Activated naive CD4-positive, alpha-beta T cell treated with anti-CD3 and anti-CD28 coated beads for 36 hours (primary cell): ENCODE measurements at regions of chr6 and their contacts with region 1.

Region 1: DNA sequence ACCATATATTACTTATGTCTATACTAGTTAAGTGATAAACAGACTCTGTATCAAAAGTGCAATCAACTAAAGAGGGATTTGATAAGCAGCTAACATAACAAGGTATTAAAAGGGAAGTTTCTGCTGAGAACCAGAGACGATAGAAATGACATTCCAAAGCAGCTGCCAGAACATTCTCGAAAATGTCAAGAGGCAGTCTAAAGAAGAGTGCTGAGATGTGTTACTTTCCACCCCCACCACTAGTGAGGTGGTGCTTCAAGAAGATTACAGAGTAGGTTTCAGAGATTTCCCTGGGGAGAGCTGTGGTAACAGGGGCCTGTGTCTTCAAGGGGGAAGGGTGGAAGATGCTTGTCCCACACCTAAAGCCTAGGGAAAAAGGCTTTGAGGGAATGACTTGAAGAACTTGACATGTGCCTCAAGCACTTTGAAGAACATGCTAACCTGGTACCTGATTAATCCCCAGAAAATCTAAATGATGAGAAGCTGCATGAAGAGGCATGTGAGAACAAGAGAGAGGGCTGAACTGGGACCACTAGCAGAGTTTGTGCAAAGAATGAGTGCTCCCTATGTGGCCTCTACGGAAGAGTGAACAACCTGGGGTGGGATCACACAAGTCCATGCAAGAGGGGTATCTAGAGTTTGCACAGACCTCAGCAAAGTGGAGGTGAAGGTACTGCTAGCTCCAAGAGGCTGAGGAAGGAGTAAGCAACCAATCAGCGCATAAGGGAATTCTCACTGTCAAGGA is 5.0 kb downstream of the FAM184A start:
- DNase-seq: no peak
- H3K4me3 Mint-ChIP-seq: no peak overlapping the region
- H3K27ac Mint-ChIP-seq: peak overlapping the region; percentile 39
- H3K4me1 Mint-ChIP-seq: peaks cover 49% of the 10 kb centered on the region
- H3K27me3 Mint-ChIP-seq: no peaks in the 10 kb centered on the region

Region 2: DNA sequence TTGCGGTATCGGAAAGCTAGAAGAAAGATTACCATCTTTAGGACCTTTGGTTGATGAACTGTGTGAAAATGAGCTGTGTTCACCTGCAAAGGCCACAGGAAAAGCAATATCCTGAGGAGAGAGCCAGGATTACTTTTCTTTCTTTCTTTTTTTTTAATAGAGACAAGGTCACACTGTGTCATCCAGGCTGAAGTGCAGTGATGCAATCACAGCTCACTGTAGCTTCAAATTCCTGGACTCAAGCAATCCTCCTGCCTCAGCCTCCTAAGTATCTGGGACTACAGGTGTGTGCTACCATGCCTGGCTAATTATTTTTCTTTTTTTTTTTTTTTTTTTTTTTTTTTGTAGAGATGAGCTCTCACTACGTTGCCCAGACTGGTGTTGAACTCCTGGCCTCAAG is 12.3 kb before region 1 on chr6:
- CTCF ChIA-PET with region 1: interaction called, 4 read pairs
- intact Hi-C with region 1: loop called (anchors 1 kb)
- DNase-seq: no peak
- H3K4me3 Mint-ChIP-seq: no peak overlapping the region
- H3K27ac Mint-ChIP-seq: no peak overlapping the region
- H3K4me1 Mint-ChIP-seq: peaks cover 12% of the 10 kb centered on the region
- H3K27me3 Mint-ChIP-seq: no peaks in the 10 kb centered on the region